ENCODE measurements at regions of chr2 and their contacts with region 1.

Region 1: DNA sequence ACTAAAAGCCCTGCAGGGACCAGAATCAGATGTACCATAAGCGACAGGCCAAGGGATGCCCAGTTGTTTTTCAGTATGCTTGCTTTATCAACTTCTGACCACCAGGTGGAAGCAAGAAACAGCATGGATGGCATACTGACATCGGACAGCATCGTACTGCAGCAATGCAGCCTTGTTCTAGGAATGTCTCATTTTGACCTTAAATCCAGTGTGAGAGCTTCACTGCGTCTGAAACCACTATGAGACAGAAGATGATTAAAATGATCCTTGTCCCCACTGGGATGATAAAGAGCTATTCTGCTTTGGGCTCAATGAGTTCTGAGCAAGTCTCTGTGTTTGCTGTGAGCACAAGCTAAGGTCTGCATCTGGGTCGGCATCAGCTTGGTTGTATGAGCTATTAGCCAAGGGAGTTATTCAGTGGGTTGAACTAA is 54.3 kb downstream of the CDK15 start:
- H3K4me3 Mint-ChIP-seq: no peak overlapping the region
- H3K27ac Mint-ChIP-seq: no peak overlapping the region
- H3K4me1 Mint-ChIP-seq: peaks cover 16% of the 10 kb centered on the region
- H3K27me3 Mint-ChIP-seq: peaks cover 34% of the 10 kb centered on the region

Region 2: DNA sequence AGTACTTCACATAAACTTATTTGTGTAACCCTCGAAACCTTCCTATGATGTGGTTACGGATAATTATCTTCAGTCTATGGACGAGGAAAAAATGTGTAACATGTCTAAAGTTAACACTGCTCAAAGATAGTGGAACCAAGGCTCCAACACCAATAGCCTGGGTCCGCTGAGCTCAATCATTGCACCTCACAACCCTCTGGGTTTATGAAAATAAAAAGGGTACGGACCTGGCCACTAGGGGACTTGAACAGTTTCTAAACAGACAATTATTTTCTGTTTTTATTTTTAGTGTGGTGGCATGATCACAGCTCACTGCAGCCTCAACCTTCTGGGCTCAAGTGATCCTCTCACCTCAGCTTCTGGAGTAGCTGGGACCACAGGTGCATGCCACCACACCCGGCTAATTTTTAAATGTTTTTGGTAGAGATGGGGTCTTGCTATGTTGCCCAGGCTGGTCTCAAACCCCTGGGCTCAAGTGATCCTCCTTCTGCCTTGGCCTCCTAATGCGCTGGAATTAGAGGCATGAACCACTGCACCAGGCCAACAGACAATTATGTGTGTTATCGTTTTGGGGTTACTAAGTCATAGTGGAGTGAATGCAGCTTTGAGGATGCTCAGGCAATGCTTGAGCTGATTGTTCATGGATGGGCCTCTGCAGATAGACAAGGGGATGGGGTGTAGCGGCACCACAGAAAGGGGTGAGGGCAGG is 590.2 kb before region 1 on chr2:
- intact Hi-C with region 1: no loop called
- H3K4me3 Mint-ChIP-seq: no peak overlapping the region
- H3K27ac Mint-ChIP-seq: peak overlapping the region; percentile 42
- H3K4me1 Mint-ChIP-seq: peaks cover 35% of the 10 kb centered on the region
- H3K27me3 Mint-ChIP-seq: no peaks in the 10 kb centered on the region

Region 3: GRCh38 chr2:201452058-201452921 is 408.4 kb before region 1 on chr2:
- intact Hi-C with region 1: no loop called
- H3K4me3 Mint-ChIP-seq: peak overlapping the region; percentile 97
- H3K27ac Mint-ChIP-seq: peak overlapping the region; percentile 98
- H3K4me1 Mint-ChIP-seq: peaks cover 30% of the 10 kb centered on the region
- H3K27me3 Mint-ChIP-seq: no peaks in the 10 kb centered on the region

Region 4: GRCh38 chr2:202064171-202064880 is 203.7 kb after region 1 on chr2:
- intact Hi-C with region 1: loop called (anchors 10 kb)
- H3K4me3 Mint-ChIP-seq: no peak overlapping the region
- H3K27ac Mint-ChIP-seq: no peak overlapping the region
- H3K4me1 Mint-ChIP-seq: peaks cover 10% of the 10 kb centered on the region
- H3K27me3 Mint-ChIP-seq: peaks cover 1% of the 10 kb centered on the region

Measured in dendritic cell treated with granulocyte-macrophage colony-stimulating factor and Interleukin-4, amounts not matched to agents 40 ng/mL and 50 ng/mL, for 4 days (primary cell).